ENCODE measurements at regions of chr12 and their contacts with region 1.

Region 1: GRCh38 chr12:818733-819132 is 66.4 kb downstream of the WNK1 start:
- DNase-seq: no peak
- ATAC-seq: no peak
- H3K4me3 Mint-ChIP-seq: no peak overlapping the region
- H3K27ac Mint-ChIP-seq: no peak overlapping the region
- H3K4me1 Mint-ChIP-seq: peaks cover 61% of the 10 kb centered on the region
- H3K27me3 Mint-ChIP-seq: no peaks in the 10 kb centered on the region

Region 2: DNA sequence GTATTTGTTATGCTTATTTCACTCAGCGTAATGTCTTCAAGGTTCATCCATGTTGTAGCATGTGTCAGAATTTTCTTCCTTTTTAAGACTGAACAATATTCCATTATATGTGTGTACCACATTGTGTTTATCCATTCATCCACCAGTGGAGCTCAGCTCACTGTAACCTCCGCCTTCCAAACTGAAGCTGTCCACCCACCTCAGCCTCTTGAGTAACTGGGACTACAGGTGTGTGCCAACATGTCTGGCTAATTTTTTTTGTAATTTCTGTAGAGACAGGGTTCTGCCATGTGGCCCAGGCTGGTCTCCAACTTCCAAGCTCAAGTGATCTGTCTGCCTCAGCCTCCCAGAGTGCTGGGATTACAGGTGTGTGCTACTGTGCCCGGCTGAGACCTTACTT is 396.2 kb before region 1 on chr12:
- CTCF ChIA-PET with region 1: no interaction called
- POLR2A ChIA-PET with region 1: no interaction called
- intact Hi-C with region 1: no loop called
- DNase-seq: no peak
- ATAC-seq: no peak
- H3K4me3 Mint-ChIP-seq: no peak overlapping the region
- H3K27ac Mint-ChIP-seq: no peak overlapping the region
- H3K4me1 Mint-ChIP-seq: no peaks in the 10 kb centered on the region
- H3K27me3 Mint-ChIP-seq: no peaks in the 10 kb centered on the region

Region 3: GRCh38 chr12:569803-570434 is 248.8 kb before region 1 on chr12:
- CTCF ChIA-PET with region 1: interaction called, 42 read pairs
- POLR2A ChIA-PET with region 1: no interaction called
- intact Hi-C with region 1: loop called in 1 of 2 experiments (anchors 1 kb)
- DNase-seq: peak; percentile 94
- ATAC-seq: peak; percentile 89
- H3K4me3 Mint-ChIP-seq: peak overlapping the region; percentile 74
- H3K27ac Mint-ChIP-seq: peak overlapping the region; percentile 85
- H3K4me1 Mint-ChIP-seq: peaks cover 65% of the 10 kb centered on the region
- H3K27me3 Mint-ChIP-seq: no peaks in the 10 kb centered on the region

Region 4: DNA sequence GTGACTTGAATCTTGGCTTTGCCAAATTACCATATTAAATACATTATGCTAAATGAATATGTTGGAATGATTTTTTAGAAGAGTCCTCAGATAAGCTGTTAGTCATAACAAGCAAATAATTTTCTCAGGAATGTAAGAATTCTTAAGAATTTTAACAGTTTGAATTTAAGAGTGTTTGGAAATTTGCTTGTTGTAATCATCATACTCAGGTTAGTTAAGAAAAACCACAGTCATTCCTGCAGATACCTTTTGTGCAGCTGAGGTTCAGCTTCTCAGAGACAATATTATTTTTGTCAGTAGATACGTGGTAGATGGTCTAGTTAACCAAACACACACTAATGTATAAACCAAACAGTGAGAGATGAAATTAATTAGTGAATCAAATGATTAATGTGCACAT is 57.5 kb before region 1 on chr12:
- CTCF ChIA-PET with region 1: interaction called, 56 read pairs
- POLR2A ChIA-PET with region 1: no interaction called
- intact Hi-C with region 1: no loop called
- DNase-seq: no peak
- ATAC-seq: no peak
- H3K4me3 Mint-ChIP-seq: no peak overlapping the region
- H3K27ac Mint-ChIP-seq: peak overlapping the region; percentile 61
- H3K4me1 Mint-ChIP-seq: peaks cover 74% of the 10 kb centered on the region
- H3K27me3 Mint-ChIP-seq: no peaks in the 10 kb centered on the region

Region 5: GRCh38 chr12:779745-780734 is 38.7 kb before region 1 on chr12:
- CTCF ChIA-PET with region 1: interaction called, 30 read pairs
- POLR2A ChIA-PET with region 1: no interaction called
- intact Hi-C with region 1: no loop called
- DNase-seq: no peak
- ATAC-seq: peak; percentile 62
- H3K4me3 Mint-ChIP-seq: peak overlapping the region; percentile 64
- H3K27ac Mint-ChIP-seq: peak overlapping the region; percentile 75
- H3K4me1 Mint-ChIP-seq: peaks cover 70% of the 10 kb centered on the region
- H3K27me3 Mint-ChIP-seq: no peaks in the 10 kb centered on the region

Region 6: DNA sequence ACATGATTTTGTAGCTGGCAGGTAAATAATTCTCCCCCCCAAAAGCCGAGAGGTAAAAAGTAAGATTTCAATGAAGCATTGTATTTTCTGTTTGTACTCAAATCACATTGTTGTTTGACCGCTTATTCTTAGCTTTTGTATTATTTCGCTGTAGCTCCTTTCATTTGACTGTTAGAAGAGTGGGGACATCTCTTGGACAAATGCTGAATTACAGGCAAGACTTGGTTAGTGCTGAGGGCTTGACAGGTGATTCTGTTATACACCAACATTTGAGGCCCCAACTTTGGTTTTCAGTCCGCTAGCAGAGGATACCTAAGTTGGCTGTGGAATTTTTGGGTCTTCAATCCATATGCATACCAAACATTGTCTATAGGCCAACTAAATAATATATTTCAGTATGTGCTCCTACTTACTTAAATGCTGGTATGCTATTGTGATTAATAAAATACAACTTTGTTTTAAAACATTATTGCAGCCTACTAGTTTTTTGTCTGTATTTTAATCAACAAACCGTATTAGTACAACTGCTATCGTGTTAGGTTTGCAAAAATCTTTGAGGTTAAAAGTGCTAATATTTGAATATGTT is 274.5 kb after region 1 on chr12:
- CTCF ChIA-PET with region 1: interaction called, 8 read pairs
- POLR2A ChIA-PET with region 1: no interaction called
- intact Hi-C with region 1: loop called (anchors 5 kb)
- DNase-seq: peak; percentile 46
- ATAC-seq: peak; percentile 71
- H3K4me3 Mint-ChIP-seq: no peak overlapping the region
- H3K27ac Mint-ChIP-seq: no peak overlapping the region
- H3K4me1 Mint-ChIP-seq: peaks cover 27% of the 10 kb centered on the region
- H3K27me3 Mint-ChIP-seq: no peaks in the 10 kb centered on the region

Region 7: GRCh38 chr12:1185460-1186182 is 366.9 kb after region 1 on chr12:
- CTCF ChIA-PET with region 1: no interaction called
- POLR2A ChIA-PET with region 1: no interaction called
- intact Hi-C with region 1: no loop called
- DNase-seq: no peak
- ATAC-seq: peak; percentile 81
- H3K4me3 Mint-ChIP-seq: no peak overlapping the region
- H3K27ac Mint-ChIP-seq: peak overlapping the region; percentile 20
- H3K4me1 Mint-ChIP-seq: peaks cover 13% of the 10 kb centered on the region
- H3K27me3 Mint-ChIP-seq: no peaks in the 10 kb centered on the region

Region 8: GRCh38 chr12:1429980-1430379 is 611.2 kb after region 1 on chr12:
- CTCF ChIA-PET with region 1: no interaction called
- POLR2A ChIA-PET with region 1: no interaction called
- intact Hi-C with region 1: no loop called
- DNase-seq: no peak
- ATAC-seq: no peak
- H3K4me3 Mint-ChIP-seq: no peak overlapping the region
- H3K27ac Mint-ChIP-seq: no peak overlapping the region
- H3K4me1 Mint-ChIP-seq: no peaks in the 10 kb centered on the region
- H3K27me3 Mint-ChIP-seq: no peaks in the 10 kb centered on the region

Measured in activated CD4-positive, alpha-beta T cell treated with anti-CD3 and anti-CD28 coated beads for 36 hours (primary cell).